ENCODE measurements at regions of chr3 and their contacts with region 1.

Region 1: DNA sequence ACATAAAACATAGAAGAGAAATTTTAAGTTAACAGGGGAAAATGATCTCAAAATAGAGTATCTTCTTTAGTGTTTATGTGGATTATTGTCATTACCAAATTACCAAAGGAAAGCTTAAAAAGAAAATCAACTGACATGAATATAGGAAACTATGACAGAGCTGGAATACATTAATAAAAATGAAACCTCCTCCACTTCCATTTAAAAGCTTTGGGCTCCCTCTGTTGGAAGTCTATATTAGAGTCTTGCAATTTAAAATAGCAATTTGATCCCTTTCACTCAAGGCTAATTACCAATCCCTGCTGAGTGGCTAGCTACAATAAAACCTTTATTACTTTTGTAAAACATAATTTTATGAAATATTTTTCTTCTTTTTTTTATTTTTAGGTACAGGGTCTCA is 61.4 kb upstream of the IMPG2 start:
- DNase-seq: no peak
- H3K4me3 Mint-ChIP-seq: no peak overlapping the region
- H3K27ac Mint-ChIP-seq: no peak overlapping the region
- H3K4me1 Mint-ChIP-seq: peaks cover 31% of the 10 kb centered on the region
- H3K27me3 Mint-ChIP-seq: no peaks in the 10 kb centered on the region

Region 2: GRCh38 chr3:100650651-100651611 is 730.9 kb before region 1 on chr3:
- intact Hi-C with region 1: loop called (anchors 5 kb)
- DNase-seq: no peak
- H3K4me3 Mint-ChIP-seq: peak overlapping the region; percentile 5
- H3K27ac Mint-ChIP-seq: peak overlapping the region; percentile 38
- H3K4me1 Mint-ChIP-seq: peaks cover 14% of the 10 kb centered on the region
- H3K27me3 Mint-ChIP-seq: peaks cover 2% of the 10 kb centered on the region

Region 3: DNA sequence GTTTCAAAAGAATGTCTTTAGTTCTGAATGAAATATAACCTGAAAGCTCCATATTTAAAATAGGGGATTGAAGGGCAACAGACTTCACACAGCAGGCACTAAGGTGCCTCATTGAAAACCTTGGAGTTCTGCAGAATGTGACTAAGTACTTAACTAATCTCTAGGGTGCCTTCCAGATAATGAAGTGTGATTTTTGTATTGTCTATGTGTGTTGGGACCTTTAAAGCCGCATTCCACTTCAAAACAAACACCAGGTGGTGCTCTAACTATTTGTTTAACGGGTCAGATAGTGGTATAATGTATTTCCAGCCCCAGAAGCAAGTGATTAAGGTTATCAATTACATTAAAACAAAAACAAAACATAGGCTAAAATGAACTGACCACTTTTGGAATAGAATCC is 644.5 kb before region 1 on chr3:
- intact Hi-C with region 1: loop called (anchors 2 kb)
- DNase-seq: no peak
- H3K4me3 Mint-ChIP-seq: no peak overlapping the region
- H3K27ac Mint-ChIP-seq: peak overlapping the region; percentile 33
- H3K4me1 Mint-ChIP-seq: peaks cover 41% of the 10 kb centered on the region
- H3K27me3 Mint-ChIP-seq: no peaks in the 10 kb centered on the region

Region 4: GRCh38 chr3:101170062-101170771 is 211.6 kb before region 1 on chr3:
- intact Hi-C with region 1: loop called (anchors 1 kb)
- DNase-seq: no peak
- H3K4me3 Mint-ChIP-seq: no peak overlapping the region
- H3K27ac Mint-ChIP-seq: peak overlapping the region; percentile 96
- H3K4me1 Mint-ChIP-seq: peaks cover 38% of the 10 kb centered on the region
- H3K27me3 Mint-ChIP-seq: no peaks in the 10 kb centered on the region

Region 5: DNA sequence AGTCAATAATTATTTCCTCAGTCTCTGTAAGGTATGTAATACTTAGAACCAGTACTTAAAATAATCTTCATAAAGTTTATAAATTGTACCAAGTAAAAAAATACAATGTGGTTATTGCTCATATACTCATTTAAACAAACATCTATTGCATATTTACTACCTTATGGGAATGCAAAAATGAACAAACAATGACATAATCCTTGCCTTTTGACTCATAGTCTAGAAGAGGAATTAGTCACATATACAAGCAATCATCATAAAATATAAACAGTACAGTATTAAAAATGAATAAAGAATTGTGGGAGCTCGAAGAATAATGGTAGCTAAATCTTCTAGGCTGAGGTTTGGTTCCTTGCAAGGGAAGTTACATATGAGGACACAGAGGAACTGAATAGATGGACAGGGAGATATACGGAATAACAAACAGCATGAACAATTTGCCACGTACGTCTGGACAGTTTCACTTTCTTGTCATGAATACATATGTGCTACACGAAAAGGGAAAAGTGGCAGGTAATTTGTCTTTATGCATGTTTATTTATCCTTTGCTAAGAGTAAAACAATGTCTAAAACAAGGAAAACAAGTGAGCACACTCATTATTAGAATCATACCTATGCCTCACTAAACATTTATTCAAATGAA is 78.6 kb before region 1 on chr3:
- intact Hi-C with region 1: no loop called
- DNase-seq: no peak
- H3K4me3 Mint-ChIP-seq: no peak overlapping the region
- H3K27ac Mint-ChIP-seq: no peak overlapping the region
- H3K4me1 Mint-ChIP-seq: no peaks in the 10 kb centered on the region
- H3K27me3 Mint-ChIP-seq: no peaks in the 10 kb centered on the region

Region 6: DNA sequence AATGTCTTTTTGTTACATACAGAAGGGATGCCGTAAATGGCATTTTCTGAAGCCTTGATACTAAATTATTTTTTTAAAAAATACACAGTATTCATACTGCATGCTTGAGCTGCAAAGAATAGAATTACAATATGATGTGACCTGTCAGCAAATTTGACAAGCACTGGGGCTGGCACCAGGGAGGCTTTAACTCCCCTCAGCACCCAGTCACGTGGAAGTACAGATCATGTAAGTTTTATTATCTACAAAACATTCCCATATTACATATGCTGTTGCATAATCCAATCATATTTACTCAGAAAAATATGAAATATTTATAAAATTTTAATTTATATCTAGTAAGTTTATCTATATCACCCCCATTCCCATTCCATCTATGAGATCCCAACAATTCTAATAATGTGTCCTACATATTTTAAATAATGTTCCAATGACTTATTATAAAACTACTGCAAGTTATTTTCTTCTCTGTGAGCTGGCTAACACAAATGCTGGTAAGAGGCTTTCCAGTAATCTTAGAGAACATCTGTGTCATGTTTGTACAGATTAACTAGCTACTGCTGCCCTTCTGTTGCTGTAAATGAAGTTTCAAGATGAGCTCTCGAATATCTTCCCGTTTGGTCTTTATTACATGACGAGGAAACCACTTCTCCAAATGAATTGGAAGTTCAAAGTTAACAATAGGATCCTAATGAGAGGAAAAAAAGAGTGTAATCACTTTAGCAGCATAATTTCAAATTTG is 56.2 kb before region 1 on chr3:
- intact Hi-C with region 1: no loop called
- DNase-seq: no peak
- H3K4me3 Mint-ChIP-seq: no peak overlapping the region
- H3K27ac Mint-ChIP-seq: no peak overlapping the region
- H3K4me1 Mint-ChIP-seq: no peaks in the 10 kb centered on the region
- H3K27me3 Mint-ChIP-seq: no peaks in the 10 kb centered on the region

Region 7: GRCh38 chr3:101414121-101414520 is 32.3 kb after region 1 on chr3:
- intact Hi-C with region 1: no loop called
- DNase-seq: no peak
- H3K4me3 Mint-ChIP-seq: no peak overlapping the region
- H3K27ac Mint-ChIP-seq: no peak overlapping the region
- H3K4me1 Mint-ChIP-seq: peaks cover 12% of the 10 kb centered on the region
- H3K27me3 Mint-ChIP-seq: no peaks in the 10 kb centered on the region

Region 8: DNA sequence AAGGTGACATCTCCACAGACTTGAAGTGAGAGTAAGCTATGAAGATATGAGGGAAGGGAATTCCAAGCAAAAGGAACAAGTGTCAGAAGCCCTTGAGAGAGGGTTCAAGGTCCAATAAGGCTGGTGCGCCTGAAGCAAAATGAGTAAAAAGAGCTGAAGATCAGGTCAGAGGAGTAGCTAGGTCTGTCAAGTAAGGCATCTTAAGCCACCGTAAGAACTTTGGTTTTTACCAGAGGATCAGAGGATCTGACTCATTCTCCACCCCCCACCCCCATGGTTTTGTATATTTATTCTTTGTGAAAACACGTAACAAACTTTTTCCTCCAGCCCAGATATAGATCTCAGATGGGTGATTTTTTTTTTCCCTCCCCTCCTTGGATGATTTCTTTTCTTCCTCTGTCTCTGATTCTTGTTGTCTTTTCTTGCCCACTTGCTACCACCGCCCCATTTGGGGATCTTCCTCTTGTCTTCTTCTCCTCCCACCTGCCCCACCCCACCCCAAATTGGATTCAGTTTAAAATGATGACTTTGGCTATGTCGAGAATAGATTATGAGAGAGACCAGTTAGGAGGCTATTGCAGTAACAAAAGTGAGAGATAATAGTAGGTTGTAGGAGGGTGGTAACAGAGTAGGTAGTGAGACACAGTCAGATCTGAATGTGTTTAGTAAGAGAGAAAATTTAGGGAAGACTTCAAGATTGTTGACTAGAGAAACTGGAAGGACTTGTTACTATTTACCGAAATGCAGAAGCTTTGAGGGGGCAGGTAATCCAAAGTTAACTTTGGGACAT is 185.9 kb after region 1 on chr3:
- intact Hi-C with region 1: loop called (anchors 1 kb)
- DNase-seq: no peak
- H3K4me3 Mint-ChIP-seq: peak overlapping the region; percentile 54
- H3K27ac Mint-ChIP-seq: peak overlapping the region; percentile 93
- H3K4me1 Mint-ChIP-seq: peaks cover 59% of the 10 kb centered on the region
- H3K27me3 Mint-ChIP-seq: no peaks in the 10 kb centered on the region